Endothelial cell of umbilical vein (primary cell): ENCODE measurements at regions of chr10 and their contacts with region 1.

Region 1: GRCh38 chr10:38010119-38010903 is at the start of gene ZNF33A:
- DNase-seq: peak; percentile 95
- H3K4me3 ChIP-seq: peak within 1 kb of the TSS; percentile 58 to 77 (median 67)
- H3K27ac ChIP-seq: peak within 1 kb of the TSS; percentile 60
- H3K4me1 ChIP-seq: peaks cover 13% of the 10 kb centered on the region
- H3K27me3 ChIP-seq: peaks cover 2 to 5% of the 10 kb centered on the region in 2 experiments
- CTCF ChIP-seq: no peak
- POLR2A ChIP-seq: no peak
- total RNA-seq, gene ZNF33A: 13.2 and 14.5 TPM in 2 replicates

Region 2: GRCh38 chr10:37857287-37858211 is 152.8 kb before region 1 on chr10 and contains the start of gene ZNF248:
- CTCF ChIA-PET with region 1: no interaction called
- POLR2A ChIA-PET with region 1: no interaction called
- dilution Hi-C with region 1: no loop called
- intact Hi-C with region 1: loop called (anchors 1 kb)
- DNase-seq: peak; percentile 97
- H3K4me3 ChIP-seq: peak within 1 kb of the TSS; percentile 51 to 91 (median 64)
- H3K27ac ChIP-seq: peak within 1 kb of the TSS; percentile 71
- H3K4me1 ChIP-seq: peaks cover 11% of the 10 kb centered on the region
- H3K27me3 ChIP-seq: no peaks in the 10 kb centered on the region
- CTCF ChIP-seq: no peak
- POLR2A ChIP-seq: peak; percentile 96
- total RNA-seq, gene ZNF248: 6.4 and 6.5 TPM in 2 replicates

Region 3: DNA sequence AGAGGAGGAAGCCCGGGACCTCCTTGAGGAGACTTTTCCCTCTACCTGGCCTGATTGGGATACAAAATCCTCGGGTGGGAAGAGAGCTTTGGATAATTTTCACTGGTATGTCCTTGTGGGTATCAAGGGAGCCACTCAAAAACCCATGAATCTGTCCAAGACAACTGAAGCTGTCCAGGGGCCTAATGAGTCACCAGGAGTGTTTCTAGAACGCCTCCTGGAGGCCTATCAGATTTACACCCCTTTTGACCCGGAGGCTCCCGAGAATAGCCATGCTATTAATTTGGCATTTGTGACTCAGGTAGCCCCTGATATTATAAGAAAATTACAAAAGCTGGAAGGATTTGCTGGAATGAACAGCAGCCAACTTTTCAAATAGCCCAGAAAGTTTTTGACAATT is 72.4 kb before region 1 on chr10:
- CTCF ChIA-PET with region 1: no interaction called
- POLR2A ChIA-PET with region 1: no interaction called
- dilution Hi-C with region 1: no loop called
- intact Hi-C with region 1: no loop called
- DNase-seq: no peak
- H3K4me3 ChIP-seq: no peak overlapping the region
- H3K27ac ChIP-seq: no peak overlapping the region
- H3K4me1 ChIP-seq: no peaks in the 10 kb centered on the region
- H3K27me3 ChIP-seq: no peaks in the 10 kb centered on the region
- CTCF ChIP-seq: no peak
- POLR2A ChIP-seq: no peak

Region 4: GRCh38 chr10:38094158-38094920 is 84.0 kb after region 1 on chr10 and contains the start of gene ZNF37A:
- CTCF ChIA-PET with region 1: no interaction called
- POLR2A ChIA-PET with region 1: no interaction called
- dilution Hi-C with region 1: no loop called
- intact Hi-C with region 1: loop called (anchors 1 kb)
- DNase-seq: peak; percentile 96
- H3K4me3 ChIP-seq: peak within 1 kb of the TSS; percentile 29 to 65 (median 45)
- H3K27ac ChIP-seq: peak within 1 kb of the TSS; percentile 18
- H3K4me1 ChIP-seq: no peaks in the 10 kb centered on the region
- H3K27me3 ChIP-seq: no peaks in the 10 kb centered on the region
- CTCF ChIP-seq: no peak
- POLR2A ChIP-seq: peak; percentile 65
- total RNA-seq, gene ZNF37A: 10.4 and 14.5 TPM in 2 replicates